Activated CD4-positive, alpha-beta T cell treated with anti-CD3 and anti-CD28 coated beads, Interleukin-2, amount 10 ng/mL, durations not matched to agents 7 days and 5 days (primary cell): ENCODE measurements at regions of chr9 and their contacts with region 1.

Region 1: DNA sequence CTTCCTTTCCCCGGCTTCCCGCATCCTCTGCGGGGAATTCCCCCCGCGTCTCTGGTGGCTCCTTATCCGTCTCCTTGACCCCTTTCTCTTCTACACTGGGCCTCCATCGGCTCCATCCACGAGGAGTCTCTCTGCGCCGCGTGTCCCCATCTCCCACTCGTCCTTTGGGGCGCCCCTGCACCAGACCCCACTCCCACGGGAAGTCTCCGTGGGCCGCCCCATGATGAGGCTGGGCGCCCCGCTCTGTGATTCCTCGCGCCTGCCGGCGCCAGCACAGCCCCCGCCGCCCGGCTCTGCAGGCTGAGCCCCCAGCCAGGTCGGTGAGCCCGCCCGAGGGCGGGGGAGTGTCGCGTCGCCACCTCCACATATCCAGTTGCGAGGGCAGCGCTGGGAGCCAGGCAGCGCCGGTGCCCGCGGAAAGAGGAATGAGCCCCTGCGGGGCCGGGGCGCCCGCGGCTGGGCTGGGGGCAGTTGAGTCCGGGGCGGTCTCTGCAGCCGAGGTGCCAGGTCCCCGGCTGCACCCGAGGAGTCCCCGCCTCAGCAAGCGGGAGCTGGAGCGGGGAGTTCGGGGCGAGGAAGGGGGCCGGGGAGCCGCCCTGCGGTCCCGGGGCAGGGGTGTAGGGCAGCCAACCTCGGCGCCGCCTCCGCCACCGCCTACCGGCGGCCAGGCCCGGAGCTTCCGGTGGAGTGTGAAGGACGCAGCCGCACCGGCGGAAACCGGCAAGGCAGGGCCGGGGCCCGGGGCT is 2.1 kb upstream of the TRAF1 start:
- DNase-seq: peak; percentile 80
- H3K4me3 Mint-ChIP-seq: peak overlapping the region; percentile 92
- H3K27ac Mint-ChIP-seq: peak overlapping the region; percentile 98
- H3K4me1 Mint-ChIP-seq: peaks cover 82% of the 10 kb centered on the region
- H3K27me3 Mint-ChIP-seq: no peaks in the 10 kb centered on the region

Region 2: GRCh38 chr9:120913647-120914264 is 14.9 kb before region 1 on chr9:
- CTCF ChIA-PET with region 1: interaction called, 10 read pairs
- POLR2A ChIA-PET with region 1: interaction called, 7 read pairs
- DNase-seq: no peak
- H3K4me3 Mint-ChIP-seq: no peak overlapping the region
- H3K27ac Mint-ChIP-seq: peak overlapping the region; percentile 72
- H3K4me1 Mint-ChIP-seq: peaks cover 84% of the 10 kb centered on the region
- H3K27me3 Mint-ChIP-seq: no peaks in the 10 kb centered on the region

Region 3: GRCh38 chr9:120940573-120940972 is 11.9 kb after region 1 on chr9:
- CTCF ChIA-PET with region 1: interaction called, 11 read pairs
- POLR2A ChIA-PET with region 1: no interaction called
- DNase-seq: no peak
- H3K4me3 Mint-ChIP-seq: no peak overlapping the region
- H3K27ac Mint-ChIP-seq: no peak overlapping the region
- H3K4me1 Mint-ChIP-seq: peaks cover 22% of the 10 kb centered on the region
- H3K27me3 Mint-ChIP-seq: peaks cover 6% of the 10 kb centered on the region

Region 4: GRCh38 chr9:120966013-120966369 is 37.3 kb after region 1 on chr9:
- CTCF ChIA-PET with region 1: no interaction called
- POLR2A ChIA-PET with region 1: no interaction called
- DNase-seq: no peak
- H3K4me3 Mint-ChIP-seq: no peak overlapping the region
- H3K27ac Mint-ChIP-seq: no peak overlapping the region
- H3K4me1 Mint-ChIP-seq: no peaks in the 10 kb centered on the region
- H3K27me3 Mint-ChIP-seq: peaks cover 1% of the 10 kb centered on the region

Region 5: GRCh38 chr9:121038804-121039203 is 110.1 kb after region 1 on chr9:
- CTCF ChIA-PET with region 1: no interaction called
- POLR2A ChIA-PET with region 1: no interaction called
- DNase-seq: no peak
- H3K4me3 Mint-ChIP-seq: no peak overlapping the region
- H3K27ac Mint-ChIP-seq: no peak overlapping the region
- H3K4me1 Mint-ChIP-seq: peaks cover 2% of the 10 kb centered on the region
- H3K27me3 Mint-ChIP-seq: peaks cover 2% of the 10 kb centered on the region